CD4-positive, alpha-beta T cell (primary cell): ENCODE measurements at regions of chr1 and their contacts with region 1.

Region 1: DNA sequence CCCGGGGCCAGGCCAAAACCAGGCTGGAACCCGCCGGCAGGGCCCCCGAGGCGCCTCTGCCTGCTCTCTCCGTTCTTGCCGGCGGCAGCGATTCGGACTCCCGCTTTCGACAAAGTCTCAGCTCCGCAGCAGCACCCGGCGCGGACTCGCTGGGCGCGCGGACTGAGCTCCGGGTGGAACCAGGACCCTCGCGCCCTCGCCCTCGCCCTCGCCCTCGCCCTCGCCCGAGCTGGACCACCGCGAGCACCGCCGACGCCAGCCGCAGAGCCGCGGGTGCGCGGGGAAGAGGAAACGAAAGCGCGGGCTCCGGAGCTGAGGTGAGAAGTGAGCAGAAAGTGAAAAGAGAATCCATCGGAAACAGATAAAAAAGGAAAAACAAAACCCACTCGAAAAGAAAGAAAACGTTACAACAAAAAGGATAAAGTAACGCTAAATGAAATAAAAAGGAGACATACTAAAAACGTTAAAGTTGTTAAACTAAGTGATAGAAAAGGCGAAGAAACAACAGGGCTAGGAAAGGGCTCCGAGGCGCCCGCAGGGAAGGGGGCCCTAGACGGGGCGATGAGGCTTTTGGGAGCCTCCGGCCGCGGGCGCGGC is 64.9 kb downstream of the MEF2D start:
- DNase-seq: peak in 7 of 14 experiments; percentile 18 to 59 (median 40)
- ATAC-seq: peak; percentile 41
- H3K4me3 ChIP-seq: peak overlapping the region; percentile 35
- H3K4me3 Mint-ChIP-seq: peak overlapping the region; percentile 84
- H3K27ac ChIP-seq: no peak overlapping the region
- H3K27ac Mint-ChIP-seq: no peak overlapping the region
- H3K4me1 ChIP-seq: peaks cover 38% of the 10 kb centered on the region
- H3K4me1 Mint-ChIP-seq: peaks cover 27% of the 10 kb centered on the region
- H3K27me3 ChIP-seq: peaks cover 77 to 95% of the 10 kb centered on the region in 2 experiments
- H3K27me3 Mint-ChIP-seq: peaks cover 97% of the 10 kb centered on the region
- CTCF ChIP-seq: no peak

Region 2: DNA sequence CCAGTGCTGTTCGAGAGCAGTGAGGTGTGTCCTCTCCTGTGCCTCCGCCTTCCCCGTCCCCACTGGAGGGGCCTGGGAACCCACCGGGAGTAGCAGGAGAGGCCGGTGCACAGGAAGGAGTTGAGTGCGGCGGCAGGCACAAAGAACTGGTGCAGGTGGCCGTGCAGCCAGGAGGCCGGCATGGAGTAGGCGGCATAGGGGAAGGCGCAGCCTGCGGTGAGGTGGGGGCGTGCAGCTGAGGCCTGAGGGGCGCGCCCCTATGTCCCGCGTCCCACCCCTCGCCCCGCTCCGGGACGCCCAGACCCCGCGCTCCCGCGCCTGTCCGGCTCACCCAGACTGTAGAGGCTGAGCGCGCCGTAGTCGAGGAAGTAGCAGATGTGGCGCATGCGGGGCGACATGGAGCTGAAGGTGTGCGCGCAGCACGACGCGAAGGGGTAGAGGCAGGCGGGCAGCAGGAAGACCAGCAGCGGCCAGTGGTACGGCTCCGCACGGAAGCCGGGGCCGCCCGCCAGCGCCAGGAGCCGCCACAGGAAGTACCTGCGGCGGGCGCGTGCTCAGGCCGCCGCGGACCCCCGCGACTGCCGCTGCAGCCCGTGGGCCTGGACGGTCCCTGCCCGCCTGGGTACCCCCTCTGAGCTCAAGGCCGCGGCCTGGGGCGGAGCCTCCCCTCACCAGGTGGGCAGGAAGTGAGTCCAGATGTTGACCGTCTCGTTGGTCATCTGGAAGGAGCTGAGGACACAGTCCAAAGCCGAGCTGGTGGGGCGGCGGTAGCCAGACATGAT is 190.0 kb before region 1 on chr1:
- CTCF ChIA-PET with region 1: no interaction called
- POLR2A ChIA-PET with region 1: no interaction called
- intact Hi-C with region 1: no loop called
- DNase-seq: peak in 13 of 14 experiments; percentile 17 to 69 (median 32)
- ATAC-seq: peak; percentile 73
- H3K4me3 ChIP-seq: peak overlapping the region; percentile 45
- H3K4me3 Mint-ChIP-seq: peak overlapping the region; percentile 83
- H3K27ac ChIP-seq: no peak overlapping the region
- H3K27ac Mint-ChIP-seq: peak overlapping the region; percentile 31
- H3K4me1 ChIP-seq: peaks cover 20% of the 10 kb centered on the region
- H3K4me1 Mint-ChIP-seq: peaks cover 21% of the 10 kb centered on the region
- H3K27me3 ChIP-seq: no peaks in the 10 kb centered on the region
- H3K27me3 Mint-ChIP-seq: no peaks in the 10 kb centered on the region
- CTCF ChIP-seq: no peak

Region 3: GRCh38 chr1:156421062-156421938 is 14.3 kb before region 1 on chr1:
- CTCF ChIA-PET with region 1: no interaction called
- POLR2A ChIA-PET with region 1: interaction called, 5 read pairs
- intact Hi-C with region 1: loop called in 1 of 2 experiments (anchors 2 kb)
- DNase-seq: peak; percentile 20 to 83 (median 47)
- ATAC-seq: peak; percentile 65
- H3K4me3 ChIP-seq: peak overlapping the region; percentile 65
- H3K4me3 Mint-ChIP-seq: peak overlapping the region; percentile 91
- H3K27ac ChIP-seq: no peak overlapping the region
- H3K27ac Mint-ChIP-seq: no peak overlapping the region
- H3K4me1 ChIP-seq: peaks cover 30% of the 10 kb centered on the region
- H3K4me1 Mint-ChIP-seq: peaks cover 26% of the 10 kb centered on the region
- H3K27me3 ChIP-seq: peaks cover 49 to 76% of the 10 kb centered on the region in 2 experiments
- H3K27me3 Mint-ChIP-seq: peaks cover 95% of the 10 kb centered on the region
- CTCF ChIP-seq: no peak

Region 4: DNA sequence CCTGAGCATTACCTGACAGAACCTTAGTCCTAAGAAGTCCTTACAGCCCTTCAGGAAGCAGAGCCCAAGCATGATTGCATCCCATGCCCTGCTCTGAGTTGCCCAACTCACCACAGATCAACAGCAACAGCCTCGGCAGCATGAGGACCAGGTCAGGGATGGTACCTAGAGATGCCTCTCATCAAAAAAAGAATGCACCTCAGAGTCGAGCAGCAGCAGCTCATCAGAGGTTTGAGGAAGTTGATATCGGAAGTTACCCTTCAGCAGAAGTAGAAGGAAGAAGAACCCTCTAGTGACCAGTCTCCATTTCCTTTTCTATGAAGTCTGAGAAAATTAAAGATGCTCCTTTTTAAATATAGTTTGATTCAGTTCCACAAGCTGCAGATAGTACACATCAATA is 1384.3 kb after region 1 on chr1 and contains the start of gene FCRL1:
- CTCF ChIA-PET with region 1: no interaction called
- POLR2A ChIA-PET with region 1: no interaction called
- intact Hi-C with region 1: no loop called
- DNase-seq: peak in 1 of 14 experiments; percentile 3
- ATAC-seq: no peak
- H3K4me3 ChIP-seq: no peak within 1 kb of the TSS
- H3K4me3 Mint-ChIP-seq: no peak within 1 kb of the TSS
- H3K27ac ChIP-seq: no peak within 1 kb of the TSS
- H3K27ac Mint-ChIP-seq: no peak within 1 kb of the TSS
- H3K4me1 ChIP-seq: no peaks in the 10 kb centered on the region
- H3K4me1 Mint-ChIP-seq: no peaks in the 10 kb centered on the region
- H3K27me3 ChIP-seq: peaks cover 0 to under 1% of the 10 kb centered on the region in 2 experiments
- H3K27me3 Mint-ChIP-seq: peaks cover 13% of the 10 kb centered on the region
- CTCF ChIP-seq: no peak
- total RNA-seq, gene FCRL1: 0.60 to 0.98 TPM